B cell (primary cell): ENCODE measurements at regions of chr3 and their contacts with region 1.

Region 1: GRCh38 chr3:185585859-185586685 is at the start of gene SENP2:
- DNase-seq: peak; percentile 100
- ATAC-seq: peak; percentile 95
- H3K4me3 ChIP-seq: peak within 1 kb of the TSS; percentile 81 to 98 (median 93)
- H3K4me3 Mint-ChIP-seq: peak within 1 kb of the TSS; percentile 86
- H3K27ac ChIP-seq: peak within 1 kb of the TSS; percentile 92 to 96
- H3K27ac Mint-ChIP-seq: peak within 1 kb of the TSS; percentile 93
- H3K4me1 ChIP-seq: peaks cover 20 to 37% of the 10 kb centered on the region in 2 donors
- H3K4me1 Mint-ChIP-seq: peaks cover 27% of the 10 kb centered on the region
- H3K27me3 ChIP-seq: no peaks in the 10 kb centered on the region
- H3K27me3 Mint-ChIP-seq: no peaks in the 10 kb centered on the region
- CTCF ChIP-seq: no peak
- total RNA-seq, gene SENP2: 43.4 and 46.0 TPM in 2 replicates

Region 2: DNA sequence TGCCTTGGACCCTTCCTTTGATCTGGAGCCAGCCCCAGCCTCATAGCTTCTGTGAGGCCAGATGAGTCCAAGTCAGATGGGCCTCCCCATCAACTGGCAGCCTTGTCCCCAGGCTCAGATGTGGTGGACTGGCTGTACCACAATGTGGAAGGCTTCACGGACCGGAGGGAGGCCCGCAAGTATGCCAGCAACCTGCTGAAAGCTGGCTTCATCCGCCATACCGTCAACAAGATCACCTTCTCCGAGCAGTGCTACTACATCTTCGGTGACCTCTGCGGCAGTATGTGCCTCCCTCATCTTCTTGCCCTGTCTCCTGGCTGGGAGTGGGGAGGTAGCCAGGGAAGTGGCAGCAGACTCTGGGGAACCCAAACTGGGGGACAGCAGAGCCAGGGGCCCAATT is 1418.3 kb before region 1 on chr3:
- CTCF ChIA-PET with region 1: no interaction called
- POLR2A ChIA-PET with region 1: interaction called, 11 read pairs
- intact Hi-C with region 1: no loop called
- DNase-seq: no peak
- ATAC-seq: no peak
- H3K4me3 ChIP-seq: no peak overlapping the region
- H3K4me3 Mint-ChIP-seq: no peak overlapping the region
- H3K27ac ChIP-seq: no peak overlapping the region
- H3K27ac Mint-ChIP-seq: no peak overlapping the region
- H3K4me1 ChIP-seq: no peaks in the 10 kb centered on the region
- H3K4me1 Mint-ChIP-seq: no peaks in the 10 kb centered on the region
- H3K27me3 ChIP-seq: no peaks in the 10 kb centered on the region
- H3K27me3 Mint-ChIP-seq: no peaks in the 10 kb centered on the region
- CTCF ChIP-seq: no peak

Region 3: DNA sequence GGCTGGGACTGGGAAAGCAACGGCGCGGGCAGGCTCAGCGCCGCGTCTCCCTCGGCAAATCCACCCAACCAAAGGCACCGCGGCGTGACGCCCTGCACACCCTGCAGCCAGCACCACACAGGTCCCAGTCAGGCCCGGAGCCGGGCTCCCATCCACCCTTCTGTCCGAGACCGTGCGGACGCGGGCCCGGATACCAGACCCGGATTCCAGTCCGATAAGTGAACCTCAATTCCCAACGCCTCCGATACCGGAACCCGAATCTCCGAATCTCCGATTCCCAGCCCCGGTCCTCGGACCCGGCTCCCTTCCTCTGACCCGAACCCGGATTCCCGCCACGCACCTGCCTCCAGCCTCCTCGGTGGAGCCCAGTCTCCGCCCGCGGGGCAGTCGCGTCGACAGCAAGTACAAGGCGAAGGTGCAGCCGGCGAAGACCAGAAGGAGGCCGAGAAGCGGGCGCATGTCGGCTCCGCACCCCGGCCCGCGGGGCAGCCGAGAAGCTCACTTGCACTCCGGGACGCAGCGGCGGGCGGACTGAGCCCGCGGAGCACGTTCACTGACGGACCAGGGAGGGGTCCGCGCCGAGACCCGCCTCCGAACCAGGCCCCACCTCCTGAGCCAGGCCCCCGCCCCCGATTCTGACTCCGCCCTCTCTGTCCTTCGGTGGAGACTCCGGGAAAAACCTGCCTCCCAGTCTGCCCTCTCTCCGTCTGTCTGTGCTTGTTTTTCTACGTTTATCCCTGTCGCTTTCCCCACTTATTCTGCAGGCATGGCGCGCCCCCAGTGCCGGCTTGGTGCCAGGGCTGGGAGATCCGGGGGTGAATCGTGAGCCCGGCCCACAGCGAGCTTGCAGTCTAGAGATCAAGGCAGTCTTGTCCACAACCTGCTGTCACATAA is 87.3 kb before region 1 on chr3 and contains the start of gene TMEM41A:
- CTCF ChIA-PET with region 1: no interaction called
- POLR2A ChIA-PET with region 1: interaction called, 5 read pairs
- intact Hi-C with region 1: loop called (anchors 1 kb)
- DNase-seq: peak; percentile 89
- ATAC-seq: peak; percentile 98
- H3K4me3 ChIP-seq: peak within 1 kb of the TSS; percentile 41 to 98 (median 93)
- H3K4me3 Mint-ChIP-seq: peak within 1 kb of the TSS; percentile 96
- H3K27ac ChIP-seq: peak within 1 kb of the TSS; percentile 54 to 73
- H3K27ac Mint-ChIP-seq: peak within 1 kb of the TSS; percentile 86
- H3K4me1 ChIP-seq: peaks cover 9 to 19% of the 10 kb centered on the region in 2 donors
- H3K4me1 Mint-ChIP-seq: peaks cover 18% of the 10 kb centered on the region
- H3K27me3 ChIP-seq: no peaks in the 10 kb centered on the region
- H3K27me3 Mint-ChIP-seq: peaks cover 7% of the 10 kb centered on the region
- CTCF ChIP-seq: no peak
- total RNA-seq, gene TMEM41A: 21.2 and 23.7 TPM in 2 replicates

Region 4: DNA sequence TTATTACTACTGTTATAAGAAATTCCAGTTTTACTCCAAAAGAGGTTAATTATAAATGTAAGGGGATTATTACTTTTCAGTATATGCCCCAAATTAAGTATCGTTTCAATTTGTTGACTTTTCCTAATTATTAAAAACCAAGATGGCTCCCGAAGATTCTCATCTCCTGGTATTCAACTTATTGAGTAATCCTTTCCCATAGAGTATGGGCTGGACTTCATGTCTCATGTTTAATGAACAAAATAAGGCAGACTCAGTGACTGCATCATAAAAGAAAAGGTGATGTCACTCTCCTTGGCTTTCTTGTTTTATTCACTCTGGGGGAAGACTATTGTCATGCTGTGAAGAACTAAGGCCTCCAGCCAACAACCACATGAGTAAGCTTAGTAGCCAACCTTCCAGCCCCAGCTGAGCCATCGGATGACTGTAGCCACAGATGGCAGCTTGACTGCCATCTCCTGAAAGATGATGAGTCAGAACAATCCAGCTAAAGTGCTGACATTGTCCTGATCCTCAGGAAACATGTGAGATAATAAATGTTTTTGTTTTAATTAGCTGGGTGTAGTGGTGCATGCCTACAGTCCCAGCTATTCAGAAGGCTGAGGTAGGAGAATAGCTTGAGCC is 221.5 kb after region 1 on chr3:
- CTCF ChIA-PET with region 1: no interaction called
- POLR2A ChIA-PET with region 1: no interaction called
- intact Hi-C with region 1: no loop called
- DNase-seq: no peak
- ATAC-seq: no peak
- H3K4me3 ChIP-seq: no peak overlapping the region
- H3K4me3 Mint-ChIP-seq: no peak overlapping the region
- H3K27ac ChIP-seq: no peak overlapping the region
- H3K27ac Mint-ChIP-seq: no peak overlapping the region
- H3K4me1 ChIP-seq: no peaks in the 10 kb centered on the region
- H3K4me1 Mint-ChIP-seq: no peaks in the 10 kb centered on the region
- H3K27me3 ChIP-seq: no peaks in the 10 kb centered on the region
- H3K27me3 Mint-ChIP-seq: peaks cover 9% of the 10 kb centered on the region
- CTCF ChIP-seq: no peak